Naive thymus-derived CD4-positive, alpha-beta T cell (primary cell): ENCODE measurements at regions of chrX and their contacts with region 1.

Region 1: GRCh38 chrX:17697191-17697590 is 40.1 kb upstream of the SCML1 start:
- DNase-seq: peak in 5 of 9 donors; percentile 0 to 28 (median 14)
- ATAC-seq: no peak
- H3K4me3 ChIP-seq: no peak overlapping the region
- H3K4me3 Mint-ChIP-seq: no peak overlapping the region
- H3K27ac ChIP-seq: no peak overlapping the region
- H3K27ac Mint-ChIP-seq: no peak overlapping the region
- H3K4me1 ChIP-seq: no peaks in the 10 kb centered on the region
- H3K4me1 Mint-ChIP-seq: no peaks in the 10 kb centered on the region
- H3K27me3 ChIP-seq: no peaks in the 10 kb centered on the region
- H3K27me3 Mint-ChIP-seq: no peaks in the 10 kb centered on the region

Region 2: DNA sequence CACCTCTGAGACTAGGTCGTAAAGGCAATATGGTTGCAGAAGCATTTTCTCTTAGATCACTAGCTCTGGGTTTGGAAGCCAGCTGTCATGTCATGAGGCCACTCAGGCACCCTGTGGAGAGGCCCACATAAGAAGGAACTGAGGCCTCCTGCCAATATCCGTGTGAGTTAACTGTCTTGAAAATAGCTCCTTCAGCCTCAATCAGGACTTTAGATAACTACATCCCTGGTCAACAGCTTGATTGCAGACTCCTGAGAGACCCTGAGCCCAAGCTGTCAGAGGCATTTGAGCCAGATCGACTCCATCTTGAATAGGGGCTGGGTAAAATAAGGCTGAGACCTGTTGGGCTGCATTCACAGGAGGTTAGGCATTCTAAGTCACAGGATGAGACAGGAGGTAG is 765.8 kb before region 1 on chrX:
- CTCF ChIA-PET with region 1: no interaction called
- POLR2A ChIA-PET with region 1: no interaction called
- intact Hi-C with region 1: no loop called
- DNase-seq: no peak
- ATAC-seq: no peak
- H3K4me3 ChIP-seq: no peak overlapping the region
- H3K4me3 Mint-ChIP-seq: no peak overlapping the region
- H3K27ac ChIP-seq: no peak overlapping the region
- H3K27ac Mint-ChIP-seq: no peak overlapping the region
- H3K4me1 ChIP-seq: no peaks in the 10 kb centered on the region
- H3K4me1 Mint-ChIP-seq: no peaks in the 10 kb centered on the region
- H3K27me3 ChIP-seq: no peaks in the 10 kb centered on the region
- H3K27me3 Mint-ChIP-seq: peaks cover 0 to 3% (median 0%) of the 10 kb centered on the region in 5 donors

Region 3: GRCh38 chrX:17967888-17968287 is 270.7 kb after region 1 on chrX:
- CTCF ChIA-PET with region 1: no interaction called
- POLR2A ChIA-PET with region 1: no interaction called
- intact Hi-C with region 1: no loop called
- DNase-seq: no peak
- ATAC-seq: no peak
- H3K4me3 ChIP-seq: no peak overlapping the region
- H3K4me3 Mint-ChIP-seq: no peak overlapping the region
- H3K27ac ChIP-seq: no peak overlapping the region
- H3K27ac Mint-ChIP-seq: no peak overlapping the region
- H3K4me1 ChIP-seq: no peaks in the 10 kb centered on the region
- H3K4me1 Mint-ChIP-seq: no peaks in the 10 kb centered on the region
- H3K27me3 ChIP-seq: no peaks in the 10 kb centered on the region
- H3K27me3 Mint-ChIP-seq: no peaks in the 10 kb centered on the region

Region 4: GRCh38 chrX:18119857-18120256 is 422.7 kb after region 1 on chrX:
- CTCF ChIA-PET with region 1: no interaction called
- POLR2A ChIA-PET with region 1: no interaction called
- intact Hi-C with region 1: loop called in 1 of 2 experiments (anchors 2 kb)
- DNase-seq: peak in 5 of 9 donors; percentile 11 to 34 (median 16)
- ATAC-seq: no peak
- H3K4me3 ChIP-seq: no peak overlapping the region
- H3K4me3 Mint-ChIP-seq: no peak overlapping the region
- H3K27ac ChIP-seq: no peak overlapping the region
- H3K27ac Mint-ChIP-seq: no peak overlapping the region
- H3K4me1 ChIP-seq: no peaks in the 10 kb centered on the region
- H3K4me1 Mint-ChIP-seq: no peaks in the 10 kb centered on the region
- H3K27me3 ChIP-seq: no peaks in the 10 kb centered on the region
- H3K27me3 Mint-ChIP-seq: peaks cover 0 to 6% (median 5%) of the 10 kb centered on the region in 5 donors

Region 5: GRCh38 chrX:18210470-18210869 is 513.3 kb after region 1 on chrX:
- CTCF ChIA-PET with region 1: no interaction called
- POLR2A ChIA-PET with region 1: no interaction called
- intact Hi-C with region 1: loop called in 1 of 2 experiments (anchors 1 kb)
- DNase-seq: peak in 5 of 9 donors; percentile 0 to 10 (median 7)
- ATAC-seq: no peak
- H3K4me3 ChIP-seq: no peak overlapping the region
- H3K4me3 Mint-ChIP-seq: no peak overlapping the region
- H3K27ac ChIP-seq: no peak overlapping the region
- H3K27ac Mint-ChIP-seq: no peak overlapping the region
- H3K4me1 ChIP-seq: no peaks in the 10 kb centered on the region
- H3K4me1 Mint-ChIP-seq: no peaks in the 10 kb centered on the region
- H3K27me3 ChIP-seq: no peaks in the 10 kb centered on the region
- H3K27me3 Mint-ChIP-seq: no peaks in the 10 kb centered on the region